ENCODE measurements at regions of chr14 and their contacts with region 1.

Region 1: DNA sequence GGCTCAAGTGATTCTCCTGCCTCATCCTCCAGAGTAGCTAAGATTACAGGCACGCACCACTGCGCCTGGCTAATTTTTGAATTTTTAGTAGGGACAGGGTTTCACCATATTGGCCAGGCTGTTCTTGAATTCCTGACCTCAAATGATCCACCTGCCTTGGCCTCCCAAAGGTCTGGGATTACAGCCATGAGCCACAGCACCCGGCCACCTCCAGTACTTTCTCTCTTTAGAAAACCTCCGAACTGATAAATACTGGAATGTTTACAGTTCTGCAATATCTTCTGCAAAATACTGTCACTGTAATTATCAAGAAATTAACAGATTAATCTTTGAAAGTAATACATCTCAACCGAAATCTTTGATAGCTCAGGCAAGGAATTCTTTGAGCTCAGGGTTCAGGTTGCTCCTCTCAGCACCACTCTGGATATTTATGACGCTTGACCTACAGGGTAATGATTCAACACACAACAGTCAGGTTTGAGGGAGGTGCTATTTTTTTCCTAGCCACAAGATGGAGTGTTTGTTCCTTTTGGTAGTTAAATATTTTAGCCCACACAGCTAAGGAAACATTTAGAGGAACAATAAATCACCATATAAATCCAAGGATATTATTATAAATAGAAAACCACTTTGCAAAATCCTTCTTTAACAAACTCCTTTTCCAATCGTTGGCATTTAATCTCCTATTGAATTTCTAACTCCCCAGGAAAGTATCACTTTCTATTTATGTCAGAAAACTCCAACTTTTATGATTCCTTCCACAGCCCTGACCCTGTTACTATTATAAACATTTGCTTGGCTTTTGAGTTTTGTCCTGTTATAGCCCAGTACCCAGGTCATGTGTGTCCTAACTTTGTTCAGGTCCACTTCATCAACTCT is 48.6 kb upstream of the GTF2A1 start:
- DNase-seq: peak; percentile 69
- H3K4me3 ChIP-seq: no peak overlapping the region
- H3K27ac ChIP-seq: no peak overlapping the region
- H3K4me1 ChIP-seq: no peaks in the 10 kb centered on the region
- H3K27me3 ChIP-seq: no peaks in the 10 kb centered on the region
- CTCF ChIP-seq: peak; percentile 75

Region 2: DNA sequence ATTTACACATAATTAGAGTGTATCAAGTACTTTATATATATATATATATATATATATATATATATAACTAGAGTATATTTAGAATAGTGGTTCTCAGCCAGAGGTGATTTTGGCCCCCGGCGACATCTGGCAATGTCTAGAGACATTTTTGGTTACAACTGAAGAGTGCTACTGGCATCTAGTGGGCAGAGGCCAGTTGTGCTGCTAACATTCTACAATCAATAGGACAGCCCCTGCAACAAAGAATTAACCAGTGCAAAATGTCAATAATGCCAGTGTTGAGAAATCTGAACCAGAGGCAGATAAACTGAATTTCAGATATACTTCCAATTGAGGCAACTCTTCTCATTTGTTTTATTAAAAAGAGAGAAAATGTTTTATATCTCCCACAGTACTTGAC is 57.5 kb before region 1 on chr14:
- CTCF ChIA-PET with region 1: no interaction called
- POLR2A ChIA-PET with region 1: no interaction called
- intact Hi-C with region 1: no loop called
- DNase-seq: peak; percentile 45
- H3K4me3 ChIP-seq: no peak overlapping the region
- H3K27ac ChIP-seq: no peak overlapping the region
- H3K4me1 ChIP-seq: peaks cover 9% of the 10 kb centered on the region
- H3K27me3 ChIP-seq: no peaks in the 10 kb centered on the region
- CTCF ChIP-seq: peak; percentile 46

Region 3: DNA sequence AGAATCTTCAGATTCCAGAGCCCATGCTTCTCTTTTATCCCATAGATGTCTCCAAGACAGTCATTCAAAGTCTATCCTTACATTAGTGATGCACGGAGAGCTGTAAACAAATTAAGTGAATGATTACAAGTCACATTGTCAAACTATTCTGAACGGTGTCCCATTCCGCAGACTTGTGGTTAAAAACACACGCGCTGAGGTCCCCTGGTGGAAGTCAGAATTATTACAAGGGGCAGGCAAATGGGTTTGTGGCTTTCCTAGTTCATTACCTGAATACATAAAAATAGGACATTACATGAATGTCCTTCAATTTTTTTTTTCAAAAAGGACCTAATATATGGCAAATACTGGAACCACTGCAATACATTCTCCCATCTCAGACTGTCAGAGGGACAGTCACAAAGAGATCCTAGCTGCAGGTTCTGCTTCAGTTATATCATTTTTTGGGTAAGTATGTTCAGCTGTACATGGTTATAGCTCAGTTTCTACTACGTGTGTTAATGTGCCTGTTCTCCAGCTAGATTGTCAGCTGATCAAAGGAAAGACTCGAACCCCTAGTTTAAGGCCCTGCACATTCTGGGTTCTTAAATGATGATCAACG is 183.9 kb after region 1 on chr14:
- CTCF ChIA-PET with region 1: interaction called, 23 read pairs
- POLR2A ChIA-PET with region 1: no interaction called
- intact Hi-C with region 1: loop called (anchors 1 kb)
- DNase-seq: peak; percentile 66
- H3K4me3 ChIP-seq: no peak overlapping the region
- H3K27ac ChIP-seq: no peak overlapping the region
- H3K4me1 ChIP-seq: no peaks in the 10 kb centered on the region
- H3K27me3 ChIP-seq: no peaks in the 10 kb centered on the region
- CTCF ChIP-seq: peak; percentile 89

Measured in A673 (cell line).